Heart right ventricle (tissue), 16 donors: ENCODE measurements at regions of chr19 and their contacts with region 1.

Region 1: DNA sequence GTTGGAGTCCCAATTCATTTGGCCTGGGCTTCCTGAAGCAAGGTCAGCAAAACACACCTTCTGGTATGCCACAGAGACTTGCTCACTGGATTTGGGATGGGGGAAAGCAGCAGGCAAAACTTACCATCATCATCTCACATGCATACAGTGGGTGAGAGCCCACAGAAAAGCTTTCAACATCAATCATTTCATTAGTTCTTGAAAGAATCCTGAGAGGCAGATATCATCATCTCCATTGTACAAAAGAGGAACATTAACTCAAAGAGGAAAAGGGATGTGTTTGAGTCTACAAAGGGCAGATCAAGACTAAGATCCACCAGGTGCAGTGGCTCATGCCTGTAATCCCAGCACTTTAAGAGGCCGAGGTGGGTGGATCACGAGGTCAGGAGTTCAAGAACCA is 6.4 kb downstream of the WDR87 start:
- DNase-seq: no peak
- ATAC-seq: no peak
- H3K4me3 ChIP-seq: no peak overlapping the region
- H3K27ac ChIP-seq: no peak overlapping the region
- H3K4me1 ChIP-seq: no peaks in the 10 kb centered on the region
- H3K27me3 ChIP-seq: no peaks in the 10 kb centered on the region
- CTCF ChIP-seq: no peak

Region 2: GRCh38 chr19:37855098-37855497 is 44.9 kb before region 1 on chr19:
- intact Hi-C with region 1: no loop called
- DNase-seq: peak; percentile 13 to 61
- ATAC-seq: peak in 6 of 8 donors; percentile 46 to 80 (median 65)
- H3K4me3 ChIP-seq: no peak overlapping the region
- H3K27ac ChIP-seq: no peak overlapping the region
- H3K4me1 ChIP-seq: peaks cover 0 to 4% (median 0%) of the 10 kb centered on the region in 9 donors
- H3K27me3 ChIP-seq: peaks cover 0 to 50% (median 12%) of the 10 kb centered on the region in 7 donors
- CTCF ChIP-seq: no peak

Region 3: DNA sequence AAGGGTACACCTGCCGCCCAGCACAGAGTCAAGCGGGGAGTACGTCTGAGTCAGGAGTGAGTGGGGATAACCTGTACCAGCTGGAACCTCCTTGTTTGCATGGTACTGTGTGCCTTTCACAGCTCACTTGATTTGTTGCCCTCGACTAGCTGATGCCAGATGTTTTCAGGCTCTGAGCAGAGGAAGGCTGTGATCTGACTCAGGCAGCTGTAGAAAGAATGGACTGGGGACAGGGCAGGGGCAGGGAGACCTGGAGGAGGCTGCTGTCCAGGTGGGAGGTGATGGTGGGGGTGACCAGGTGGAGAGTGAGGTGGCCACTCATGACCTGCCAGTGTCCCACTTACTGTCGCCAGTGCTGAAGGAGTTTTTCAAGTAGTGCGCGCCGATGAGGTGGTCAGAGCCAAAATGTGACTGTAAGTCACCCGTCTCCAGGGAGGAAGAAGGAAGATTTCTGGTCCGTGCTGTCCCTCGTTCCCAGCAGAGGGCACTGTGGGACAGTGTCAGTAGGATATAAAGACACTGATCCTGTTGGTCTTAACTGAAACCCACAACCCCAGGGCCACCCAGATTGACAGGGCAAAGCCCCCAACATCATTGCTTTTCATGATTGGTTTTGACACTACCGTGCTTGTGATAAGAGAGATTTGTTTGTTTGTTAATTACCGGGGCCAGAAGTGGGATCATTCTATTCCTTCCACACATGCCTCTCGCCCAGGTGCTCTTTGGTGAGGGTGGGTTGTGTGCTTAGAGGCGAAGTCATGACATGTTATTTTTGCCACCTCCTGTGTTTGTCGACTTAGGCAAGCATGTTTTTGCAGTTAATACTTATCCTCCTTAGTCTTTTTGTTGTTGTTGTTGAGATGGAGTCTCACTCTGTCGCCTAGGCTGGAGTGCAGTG is 195.7 kb after region 1 on chr19:
- intact Hi-C with region 1: loop called (anchors 2 to 10 kb)
- DNase-seq: peak; percentile 59 to 68
- ATAC-seq: peak in 6 of 8 donors; percentile 50 to 76 (median 62)
- H3K4me3 ChIP-seq: no peak overlapping the region
- H3K27ac ChIP-seq: no peak overlapping the region
- H3K4me1 ChIP-seq: peaks cover 0 to 17% (median 0%) of the 10 kb centered on the region in 9 donors
- H3K27me3 ChIP-seq: no peaks in the 10 kb centered on the region
- CTCF ChIP-seq: peak; percentile 45 to 80 (median 71)

Region 4: DNA sequence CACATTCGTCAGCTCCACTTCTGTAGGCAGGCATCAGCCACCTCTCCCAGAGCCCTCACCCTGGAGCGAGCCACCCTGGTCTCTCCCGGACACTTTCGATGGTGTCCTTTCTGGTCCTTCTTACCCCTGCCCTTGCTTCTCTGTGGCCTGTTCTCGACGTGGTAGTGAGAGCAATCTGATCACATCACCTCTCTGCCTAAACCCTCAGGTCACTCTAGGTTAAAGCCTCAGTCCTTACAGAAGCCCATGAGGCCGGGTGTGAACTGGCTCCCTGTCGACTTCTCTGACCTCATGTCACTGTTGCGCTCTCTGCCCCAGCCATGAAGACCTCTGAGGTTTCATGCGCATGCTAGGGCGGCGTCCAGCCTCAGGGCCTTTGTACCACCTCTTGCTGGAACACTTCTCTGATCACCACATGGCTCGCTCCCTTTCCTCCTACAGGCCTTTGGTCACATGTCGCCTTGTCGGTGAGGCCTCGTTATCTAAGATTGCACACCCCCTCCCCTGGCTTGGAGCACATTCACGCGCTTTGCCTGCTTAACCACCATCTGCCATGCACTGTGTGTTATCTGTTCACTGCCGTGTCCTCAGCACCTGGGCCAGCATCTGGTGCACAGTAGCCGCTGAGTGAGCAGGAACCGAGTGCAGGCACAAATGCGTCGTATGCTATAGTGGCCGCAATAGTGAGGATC is 222.6 kb after region 1 on chr19:
- intact Hi-C with region 1: no loop called
- DNase-seq: no peak
- ATAC-seq: no peak
- H3K4me3 ChIP-seq: no peak overlapping the region
- H3K27ac ChIP-seq: no peak overlapping the region
- H3K4me1 ChIP-seq: no peaks in the 10 kb centered on the region
- H3K27me3 ChIP-seq: no peaks in the 10 kb centered on the region
- CTCF ChIP-seq: no peak